CD4-positive, alpha-beta T cell (primary cell): ENCODE measurements at regions of chr2 and their contacts with region 1.

Region 1: GRCh38 chr2:216139884-216140283 is 30.7 kb downstream of the XRCC5 start:
- DNase-seq: peak in 10 of 14 experiments; percentile 8 to 69 (median 28)
- ATAC-seq: peak; percentile 81
- H3K4me3 ChIP-seq: no peak overlapping the region
- H3K4me3 Mint-ChIP-seq: no peak overlapping the region
- H3K27ac ChIP-seq: no peak overlapping the region
- H3K27ac Mint-ChIP-seq: peak overlapping the region; percentile 22
- H3K4me1 ChIP-seq: no peaks in the 10 kb centered on the region
- H3K4me1 Mint-ChIP-seq: peaks cover 24% of the 10 kb centered on the region
- H3K27me3 ChIP-seq: no peaks in the 10 kb centered on the region
- H3K27me3 Mint-ChIP-seq: no peaks in the 10 kb centered on the region
- CTCF ChIP-seq: peak; percentile 46

Region 2: GRCh38 chr2:216039916-216040315 is 100.0 kb before region 1 on chr2:
- CTCF ChIA-PET with region 1: no interaction called
- POLR2A ChIA-PET with region 1: no interaction called
- intact Hi-C with region 1: loop called in 1 of 2 experiments (anchors 5 kb)
- DNase-seq: no peak
- ATAC-seq: no peak
- H3K4me3 ChIP-seq: no peak overlapping the region
- H3K4me3 Mint-ChIP-seq: no peak overlapping the region
- H3K27ac ChIP-seq: no peak overlapping the region
- H3K27ac Mint-ChIP-seq: no peak overlapping the region
- H3K4me1 ChIP-seq: no peaks in the 10 kb centered on the region
- H3K4me1 Mint-ChIP-seq: no peaks in the 10 kb centered on the region
- H3K27me3 ChIP-seq: no peaks in the 10 kb centered on the region
- H3K27me3 Mint-ChIP-seq: no peaks in the 10 kb centered on the region
- CTCF ChIP-seq: no peak

Region 3: DNA sequence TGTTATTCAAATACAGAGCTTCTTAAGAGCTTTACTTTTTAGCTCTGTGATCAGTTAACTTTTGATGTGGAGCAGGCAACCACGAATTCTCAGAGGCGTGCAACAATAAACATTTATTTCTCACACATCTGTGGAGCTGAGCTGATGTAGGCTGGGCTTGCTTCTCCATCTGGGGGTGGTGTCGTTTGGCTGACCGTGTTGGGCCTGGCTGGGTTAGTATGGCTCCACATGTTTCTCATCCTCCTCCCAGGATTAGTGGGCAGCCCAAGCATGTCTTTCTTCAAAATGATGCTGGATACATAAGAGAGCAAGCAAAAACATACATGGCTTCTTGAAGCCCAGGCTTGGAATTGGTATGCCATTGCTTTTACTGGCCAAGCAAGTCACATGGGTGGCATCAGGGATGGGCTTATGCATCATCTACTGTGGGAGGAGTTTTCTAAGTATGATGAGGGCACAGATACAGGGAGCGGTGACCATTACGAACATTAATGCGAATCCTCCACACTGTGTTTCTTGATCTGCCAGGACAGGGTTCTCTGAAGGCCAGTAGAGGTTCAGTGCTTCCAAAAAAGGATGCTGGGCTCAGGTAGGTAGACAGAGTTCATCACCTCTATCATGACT is 877.0 kb after region 1 on chr2:
- CTCF ChIA-PET with region 1: no interaction called
- POLR2A ChIA-PET with region 1: no interaction called
- intact Hi-C with region 1: no loop called
- DNase-seq: no peak
- ATAC-seq: no peak
- H3K4me3 ChIP-seq: no peak overlapping the region
- H3K4me3 Mint-ChIP-seq: no peak overlapping the region
- H3K27ac ChIP-seq: no peak overlapping the region
- H3K27ac Mint-ChIP-seq: no peak overlapping the region
- H3K4me1 ChIP-seq: no peaks in the 10 kb centered on the region
- H3K4me1 Mint-ChIP-seq: no peaks in the 10 kb centered on the region
- H3K27me3 ChIP-seq: peaks cover under 1 to 3% of the 10 kb centered on the region in 2 experiments
- H3K27me3 Mint-ChIP-seq: peaks cover 22% of the 10 kb centered on the region
- CTCF ChIP-seq: no peak